ENCODE measurements at regions of chr12 and their contacts with region 1.

Region 1: GRCh38 chr12:25074954-25075353 is 120.0 kb downstream of the DNAI7 start:
- DNase-seq: no peak
- ATAC-seq: no peak
- H3K4me3 ChIP-seq: no peak overlapping the region
- H3K27ac ChIP-seq: no peak overlapping the region
- H3K4me1 ChIP-seq: no peaks in the 10 kb centered on the region
- H3K27me3 ChIP-seq: no peaks in the 10 kb centered on the region
- CTCF ChIP-seq: no peak
- POLR2A ChIP-seq: no peak
- RAD21 ChIP-seq: no peak

Region 2: DNA sequence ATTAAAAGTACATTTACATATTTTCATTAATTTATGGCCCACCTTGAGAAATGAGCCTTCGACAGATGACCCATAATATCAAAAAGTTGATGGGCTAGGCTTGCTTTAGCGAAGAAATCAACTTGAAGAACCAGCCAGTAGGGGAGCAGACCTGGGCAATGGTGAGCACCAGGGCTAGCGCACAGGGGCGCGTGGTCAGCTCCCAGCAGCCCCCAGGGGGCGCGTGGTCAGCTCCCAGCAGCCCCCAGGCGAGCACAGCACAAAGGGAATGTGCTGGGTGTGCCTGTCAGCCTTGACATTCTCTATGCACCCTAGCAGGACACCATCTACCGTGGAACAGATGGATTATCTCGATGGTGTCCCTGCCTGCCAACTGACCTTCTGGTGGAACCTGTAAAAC is 1110.1 kb before region 1 on chr12:
- CTCF ChIA-PET with region 1: no interaction called
- POLR2A ChIA-PET with region 1: no interaction called
- dilution Hi-C with region 1: no loop called
- in situ Hi-C with region 1: no loop called
- intact Hi-C with region 1: no loop called
- DNase-seq: no peak
- ATAC-seq: no peak
- H3K4me3 ChIP-seq: no peak overlapping the region
- H3K27ac ChIP-seq: no peak overlapping the region
- H3K4me1 ChIP-seq: no peaks in the 10 kb centered on the region
- H3K27me3 ChIP-seq: no peaks in the 10 kb centered on the region
- CTCF ChIP-seq: no peak
- POLR2A ChIP-seq: no peak
- RAD21 ChIP-seq: no peak

Region 3: DNA sequence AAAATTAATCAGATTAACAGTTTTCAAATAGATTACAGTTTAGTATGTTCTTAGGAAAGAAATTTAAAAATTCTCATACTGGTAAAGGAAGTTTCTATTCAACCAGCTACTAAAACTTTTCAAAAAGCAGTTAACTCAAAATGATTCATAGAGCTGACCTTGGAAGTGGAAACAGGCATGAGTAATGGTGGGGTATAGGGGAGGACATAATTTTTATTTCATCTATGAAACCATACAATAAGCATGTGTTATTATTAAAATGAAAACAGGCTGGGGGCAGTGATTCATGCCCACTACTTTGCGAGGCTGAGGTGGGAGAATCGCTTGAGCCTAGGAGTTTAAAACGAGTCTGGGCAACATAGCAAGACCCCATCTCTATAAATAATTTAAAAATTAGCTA is 47.0 kb after region 1 on chr12:
- CTCF ChIA-PET with region 1: no interaction called
- POLR2A ChIA-PET with region 1: no interaction called
- dilution Hi-C with region 1: no loop called
- in situ Hi-C with region 1: no loop called
- intact Hi-C with region 1: loop called (anchors 5 kb)
- DNase-seq: peak; percentile 55
- ATAC-seq: no peak
- H3K4me3 ChIP-seq: no peak overlapping the region
- H3K27ac ChIP-seq: no peak overlapping the region
- H3K4me1 ChIP-seq: no peaks in the 10 kb centered on the region
- H3K27me3 ChIP-seq: no peaks in the 10 kb centered on the region
- CTCF ChIP-seq: no peak
- POLR2A ChIP-seq: no peak
- RAD21 ChIP-seq: no peak